ENCODE measurements at regions of chr11 and their contacts with region 1.

Region 1: GRCh38 chr11:62880803-62881578 is at the start of gene SLC3A2:
- DNase-seq: peak; percentile 95
- H3K4me3 ChIP-seq: peak within 1 kb of the TSS; percentile 78 to 99
- H3K27ac ChIP-seq: peak within 1 kb of the TSS; percentile 99 to 100
- H3K4me1 ChIP-seq: peaks cover 23% of the 10 kb centered on the region
- H3K27me3 ChIP-seq: no peaks in the 10 kb centered on the region
- CTCF ChIP-seq: peak; percentile 84 to 90 (median 88)
- POLR2A ChIP-seq: peak; percentile 99
- total RNA-seq, gene SLC3A2: 158 to 235 TPM

Region 2: DNA sequence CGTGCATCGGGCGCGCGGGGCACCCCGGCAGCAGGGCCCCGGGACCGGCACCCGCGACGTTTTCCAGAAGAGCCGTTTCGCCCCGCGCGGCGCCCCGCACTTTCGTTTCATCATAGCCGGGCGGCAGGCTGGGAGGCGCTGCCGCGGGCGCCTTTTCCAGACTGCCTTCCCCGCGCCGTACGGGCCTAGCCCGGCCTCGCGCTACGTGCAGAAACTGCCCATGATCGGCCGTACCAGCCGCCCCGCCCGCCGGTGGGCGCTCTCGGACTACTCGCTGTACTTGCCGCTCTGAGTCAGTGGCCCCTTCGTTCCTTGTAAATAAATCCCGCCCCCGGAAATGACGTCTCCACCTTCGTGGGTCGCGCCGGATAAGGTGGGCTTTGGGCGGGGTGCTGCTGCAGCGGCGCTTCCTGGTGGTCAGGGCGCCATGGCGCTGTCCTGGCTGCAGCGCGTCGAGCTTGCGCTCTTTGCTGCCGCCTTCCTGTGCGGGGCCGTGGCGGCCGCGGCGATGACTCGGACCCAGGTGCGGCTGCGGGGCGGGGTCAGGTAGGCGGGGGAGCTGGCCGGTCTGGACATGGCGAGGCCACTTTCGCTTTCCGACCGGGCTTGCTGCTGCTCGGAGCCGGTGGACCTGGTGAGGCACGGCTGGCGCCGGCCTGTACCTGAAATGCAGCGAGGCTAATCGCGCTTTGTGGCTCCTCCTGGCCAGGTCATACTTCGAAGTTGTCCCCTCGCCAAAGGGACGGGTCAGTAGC is 93.8 kb before region 1 on chr11 and contains the start of gene TMEM179B:
- intact Hi-C with region 1: loop called (anchors 5 kb)
- DNase-seq: peak; percentile 99
- H3K4me3 ChIP-seq: peak within 1 kb of the TSS; percentile 90 to 93
- H3K27ac ChIP-seq: peak within 1 kb of the TSS; percentile 94 to 98
- H3K4me1 ChIP-seq: peaks cover 20% of the 10 kb centered on the region
- H3K27me3 ChIP-seq: no peaks in the 10 kb centered on the region
- CTCF ChIP-seq: peak in 3 of 4 experiments; percentile 34 to 77 (median 59)
- POLR2A ChIP-seq: peak; percentile 98
- total RNA-seq, gene TMEM179B: 139 to 200 TPM

Region 3: DNA sequence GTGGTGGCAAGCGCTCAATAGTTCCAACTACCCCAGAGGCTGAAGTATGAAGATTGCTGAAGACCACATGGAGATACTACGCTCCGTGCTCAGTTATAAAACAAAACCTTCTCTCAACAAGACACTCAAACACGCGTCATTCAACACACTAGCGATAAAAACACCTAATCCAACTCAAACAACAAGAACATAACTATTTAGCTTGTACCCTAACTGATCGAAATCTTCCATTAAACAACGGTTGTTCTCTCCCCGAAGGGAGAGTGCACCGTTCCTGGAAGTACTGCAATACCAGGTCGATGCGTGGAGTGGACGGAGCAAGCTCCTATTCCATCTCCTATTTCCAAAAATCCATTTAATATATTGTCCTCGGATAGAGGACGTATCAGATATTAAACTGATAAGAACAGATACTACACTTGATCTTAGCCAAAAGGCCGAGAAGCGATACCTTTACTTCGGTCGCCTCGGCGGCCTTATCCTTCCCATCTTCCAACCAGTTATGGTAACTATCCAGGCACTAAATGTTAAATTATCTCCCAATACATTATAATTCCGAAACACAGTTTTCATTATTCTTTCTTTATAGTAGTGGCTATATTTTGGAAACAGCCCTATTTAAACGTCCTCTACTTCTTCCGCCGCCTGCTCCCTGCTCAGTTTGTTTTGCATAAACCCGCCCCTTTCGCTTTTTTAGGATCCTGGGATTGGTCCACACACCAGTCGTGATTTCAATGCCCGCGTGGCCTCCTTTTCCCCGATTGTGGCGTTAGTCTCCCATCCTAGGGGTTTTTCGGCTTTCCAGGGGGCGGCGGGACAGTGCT is 39.4 kb before region 1 on chr11:
- intact Hi-C with region 1: loop called (anchors 2 kb)
- DNase-seq: peak; percentile 86
- H3K4me3 ChIP-seq: peak overlapping the region; percentile 60 to 61
- H3K27ac ChIP-seq: peak overlapping the region; percentile 98 to 99
- H3K4me1 ChIP-seq: peaks cover 12% of the 10 kb centered on the region
- H3K27me3 ChIP-seq: no peaks in the 10 kb centered on the region
- CTCF ChIP-seq: no peak
- POLR2A ChIP-seq: peak; percentile 90